Activated CD4-positive, alpha-beta T cell treated with anti-CD3 and anti-CD28 coated beads, Interleukin-2, amount 10 ng/mL, durations not matched to agents 24 days and 14 days (primary cell): ENCODE measurements at regions of chr6 and their contacts with region 1.

Region 1: DNA sequence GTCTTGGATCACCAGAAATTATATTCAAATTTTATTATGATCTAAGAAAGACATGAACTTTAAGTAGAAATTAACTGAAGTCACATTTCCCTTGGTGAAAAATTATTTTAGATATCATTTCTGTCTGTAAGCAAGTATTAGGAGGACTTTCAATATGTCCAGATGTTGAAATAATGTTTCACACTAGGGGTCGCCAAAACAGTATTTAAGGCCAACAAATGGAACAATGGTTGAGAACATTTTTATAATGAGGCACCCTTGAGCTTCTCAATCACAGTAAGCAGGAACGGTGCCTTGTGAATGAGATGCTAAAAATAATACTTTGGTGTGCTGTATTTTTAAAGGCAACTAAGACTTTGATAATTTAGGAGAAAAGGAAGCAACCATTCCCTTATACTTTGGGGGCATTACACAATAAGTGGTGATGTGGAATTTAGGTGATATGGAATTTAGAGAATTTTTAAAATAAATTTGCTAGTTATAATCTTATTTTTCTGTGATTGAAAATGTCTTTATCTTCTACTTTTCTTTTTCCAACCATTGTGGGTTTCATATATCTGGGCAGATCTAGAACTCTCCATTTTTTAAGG is 9.6 kb upstream of the SF3B5 start:
- DNase-seq: peak; percentile 87
- H3K4me3 Mint-ChIP-seq: no peak overlapping the region
- H3K27ac Mint-ChIP-seq: no peak overlapping the region
- H3K4me1 Mint-ChIP-seq: peaks cover 7% of the 10 kb centered on the region
- H3K27me3 Mint-ChIP-seq: peaks cover 6% of the 10 kb centered on the region

Region 2: GRCh38 chr6:142387997-142388815 is 1716.8 kb before region 1 on chr6:
- intact Hi-C with region 1: no loop called
- DNase-seq: no peak
- H3K4me3 Mint-ChIP-seq: no peak overlapping the region
- H3K27ac Mint-ChIP-seq: no peak overlapping the region
- H3K4me1 Mint-ChIP-seq: no peaks in the 10 kb centered on the region
- H3K27me3 Mint-ChIP-seq: peaks cover 40% of the 10 kb centered on the region

Region 3: GRCh38 chr6:144066741-144067484 is 38.1 kb before region 1 on chr6:
- intact Hi-C with region 1: no loop called
- DNase-seq: peak; percentile 66
- H3K4me3 Mint-ChIP-seq: peak overlapping the region; percentile 11
- H3K27ac Mint-ChIP-seq: no peak overlapping the region
- H3K4me1 Mint-ChIP-seq: peaks cover 42% of the 10 kb centered on the region
- H3K27me3 Mint-ChIP-seq: peaks cover 2% of the 10 kb centered on the region

Region 4: GRCh38 chr6:144131248-144131709 is 26.3 kb after region 1 on chr6:
- intact Hi-C with region 1: loop called (anchors 2 kb)
- DNase-seq: no peak
- H3K4me3 Mint-ChIP-seq: peak overlapping the region; percentile 57
- H3K27ac Mint-ChIP-seq: peak overlapping the region; percentile 91
- H3K4me1 Mint-ChIP-seq: peaks cover 19% of the 10 kb centered on the region
- H3K27me3 Mint-ChIP-seq: no peaks in the 10 kb centered on the region

Region 5: GRCh38 chr6:144143878-144144277 is 38.9 kb after region 1 on chr6:
- intact Hi-C with region 1: no loop called
- DNase-seq: peak; percentile 8
- H3K4me3 Mint-ChIP-seq: no peak overlapping the region
- H3K27ac Mint-ChIP-seq: no peak overlapping the region
- H3K4me1 Mint-ChIP-seq: peaks cover 7% of the 10 kb centered on the region
- H3K27me3 Mint-ChIP-seq: no peaks in the 10 kb centered on the region

Region 6: GRCh38 chr6:144181639-144182038 is 76.6 kb after region 1 on chr6:
- intact Hi-C with region 1: loop called (anchors 2 kb)
- DNase-seq: no peak
- H3K4me3 Mint-ChIP-seq: no peak overlapping the region
- H3K27ac Mint-ChIP-seq: no peak overlapping the region
- H3K4me1 Mint-ChIP-seq: peaks cover 43% of the 10 kb centered on the region
- H3K27me3 Mint-ChIP-seq: no peaks in the 10 kb centered on the region

Region 7: GRCh38 chr6:144482142-144482541 is 377.1 kb after region 1 on chr6:
- intact Hi-C with region 1: loop called (anchors 1 kb)
- DNase-seq: peak; percentile 89
- H3K4me3 Mint-ChIP-seq: no peak overlapping the region
- H3K27ac Mint-ChIP-seq: no peak overlapping the region
- H3K4me1 Mint-ChIP-seq: peaks cover 9% of the 10 kb centered on the region
- H3K27me3 Mint-ChIP-seq: no peaks in the 10 kb centered on the region

Region 8: GRCh38 chr6:145214570-145214969 is 1109.6 kb after region 1 on chr6:
- intact Hi-C with region 1: loop called (anchors 10 kb)
- DNase-seq: peak; percentile 61
- H3K4me3 Mint-ChIP-seq: no peak overlapping the region
- H3K27ac Mint-ChIP-seq: no peak overlapping the region
- H3K4me1 Mint-ChIP-seq: peaks cover 4% of the 10 kb centered on the region
- H3K27me3 Mint-ChIP-seq: peaks cover 7% of the 10 kb centered on the region